ENCODE measurements at regions of chr22 and their contacts with region 1.

Region 1: GRCh38 chr22:25747245-25747944 is 5.4 kb downstream of the MYO18B start:
- DNase-seq: peak; percentile 93
- H3K4me3 ChIP-seq: no peak overlapping the region
- H3K27ac ChIP-seq: no peak overlapping the region
- H3K4me1 ChIP-seq: peaks cover 10% of the 10 kb centered on the region
- H3K27me3 ChIP-seq: no peaks in the 10 kb centered on the region
- CTCF ChIP-seq: no peak

Region 2: GRCh38 chr22:25582946-25583345 is 164.4 kb before region 1 on chr22:
- CTCF ChIA-PET with region 1: no interaction called
- dilution Hi-C with region 1: no loop called
- in situ Hi-C with region 1: no loop called
- intact Hi-C with region 1: no loop called
- DNase-seq: peak; percentile 46
- H3K4me3 ChIP-seq: no peak overlapping the region
- H3K27ac ChIP-seq: no peak overlapping the region
- H3K4me1 ChIP-seq: peaks cover 19% of the 10 kb centered on the region
- H3K27me3 ChIP-seq: no peaks in the 10 kb centered on the region
- CTCF ChIP-seq: no peak

Region 3: DNA sequence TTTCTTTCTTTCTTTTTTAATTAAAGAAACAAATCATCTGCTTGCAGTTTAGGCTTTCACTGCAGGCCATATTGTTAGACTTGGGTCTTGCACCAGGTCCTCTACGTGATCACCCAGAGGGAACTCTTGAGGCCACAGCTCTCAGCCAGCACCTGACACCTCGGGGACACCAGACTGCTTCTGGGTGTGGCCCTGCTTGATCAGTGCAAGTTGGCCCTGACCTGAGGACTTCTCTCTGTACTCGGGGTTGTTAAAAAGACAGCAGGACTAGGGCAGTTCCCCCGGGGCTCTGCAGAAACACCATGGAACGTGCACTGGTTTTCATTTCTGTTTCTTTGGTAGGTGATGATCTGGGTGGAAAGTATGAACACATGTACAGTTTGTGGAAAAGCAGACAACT is 56.6 kb before region 1 on chr22:
- CTCF ChIA-PET with region 1: no interaction called
- dilution Hi-C with region 1: no loop called
- in situ Hi-C with region 1: no loop called
- intact Hi-C with region 1: no loop called
- DNase-seq: no peak
- H3K4me3 ChIP-seq: no peak overlapping the region
- H3K27ac ChIP-seq: no peak overlapping the region
- H3K4me1 ChIP-seq: no peaks in the 10 kb centered on the region
- H3K27me3 ChIP-seq: no peaks in the 10 kb centered on the region
- CTCF ChIP-seq: no peak

Region 4: GRCh38 chr22:25759825-25760231 is 12.4 kb after region 1 on chr22:
- CTCF ChIA-PET with region 1: interaction called, 14 read pairs
- dilution Hi-C with region 1: no loop called
- in situ Hi-C with region 1: no loop called
- intact Hi-C with region 1: no loop called
- DNase-seq: peak; percentile 90
- H3K4me3 ChIP-seq: no peak overlapping the region
- H3K27ac ChIP-seq: peak overlapping the region; percentile 65
- H3K4me1 ChIP-seq: peaks cover 10% of the 10 kb centered on the region
- H3K27me3 ChIP-seq: no peaks in the 10 kb centered on the region
- CTCF ChIP-seq: no peak